ENCODE measurements at regions of chr7 and their contacts with region 1.

Region 1: DNA sequence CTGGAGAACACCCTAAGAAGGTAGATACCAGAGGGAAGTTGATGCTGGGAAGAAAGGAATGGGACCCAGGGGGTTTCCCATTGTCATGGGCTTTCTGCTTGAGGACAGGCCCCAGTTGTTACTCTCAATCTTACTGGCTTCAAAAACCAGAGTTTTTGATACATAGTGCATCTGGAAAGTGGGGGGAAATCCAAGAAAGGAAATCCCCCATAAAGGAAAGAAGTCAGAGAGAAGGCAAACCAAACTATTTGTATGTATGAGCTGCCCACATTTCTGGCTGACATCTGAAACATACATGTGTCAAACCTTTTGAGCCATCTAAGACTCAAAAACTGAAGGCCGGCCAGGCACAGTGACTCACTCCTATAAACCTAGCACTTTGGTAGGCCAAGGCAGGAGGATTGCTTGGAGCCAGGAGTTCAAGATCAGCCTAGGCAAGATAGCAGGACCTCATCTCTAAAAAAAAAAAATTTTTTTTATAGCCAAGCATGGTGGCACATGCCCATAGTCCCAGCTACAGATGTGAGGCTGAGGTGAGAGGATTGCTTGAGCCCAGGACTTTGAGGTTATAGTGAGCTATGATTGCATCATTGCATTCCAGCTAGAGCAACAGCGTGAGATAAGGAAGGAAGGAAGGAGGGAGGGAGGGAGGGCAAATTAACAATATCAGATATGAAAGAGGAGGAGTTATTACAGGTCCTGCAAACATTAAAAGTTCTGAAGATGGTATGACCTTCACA is 6.6 kb upstream of the COA1 start:
- DNase-seq: peak; percentile 74
- ATAC-seq: peak; percentile 95
- H3K4me3 Mint-ChIP-seq: no peak overlapping the region
- H3K27ac Mint-ChIP-seq: peak overlapping the region; percentile 73
- H3K4me1 Mint-ChIP-seq: peaks cover 22% of the 10 kb centered on the region
- H3K27me3 Mint-ChIP-seq: peaks cover 2% of the 10 kb centered on the region

Region 2: DNA sequence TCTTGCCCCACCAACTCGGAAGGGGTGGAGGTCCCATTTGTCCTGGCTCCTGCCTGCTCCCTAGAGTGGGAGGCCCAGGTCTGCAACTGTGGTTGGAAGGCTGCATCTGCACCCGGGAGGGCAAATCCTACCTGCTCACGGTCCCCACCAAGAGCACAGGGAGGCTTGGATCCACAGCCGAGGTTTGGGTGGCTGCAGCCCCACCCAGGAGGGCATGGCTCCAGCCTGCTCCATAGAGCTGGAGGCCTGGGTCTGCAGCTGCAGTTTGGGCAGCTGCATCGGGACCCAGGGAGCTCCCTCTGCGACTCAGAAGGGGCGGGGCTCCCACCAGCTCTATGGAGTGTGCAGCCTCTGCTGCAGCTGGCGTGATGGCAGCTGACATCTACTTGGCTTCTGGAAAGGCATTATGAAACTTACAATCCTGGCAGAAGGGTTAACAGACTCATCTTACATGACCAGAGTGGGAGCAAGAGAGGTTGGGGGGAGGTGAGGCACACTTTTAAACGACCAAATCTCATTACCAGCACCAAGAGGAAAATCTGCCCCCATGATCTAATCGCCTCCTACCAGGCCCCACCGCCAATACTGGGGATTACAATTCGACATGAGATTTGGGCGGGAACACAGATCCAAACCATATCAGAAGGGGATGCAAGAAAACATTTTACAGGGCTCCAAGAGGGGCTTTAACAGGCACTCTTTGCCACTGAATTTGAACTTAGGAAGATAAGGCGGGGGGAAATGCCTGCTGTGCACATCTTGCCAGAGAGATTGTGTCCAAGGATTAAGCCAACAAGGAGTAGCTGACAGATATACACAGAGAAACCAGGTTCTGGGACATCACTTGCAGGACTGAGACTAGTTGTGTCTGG is 14.3 kb after region 1 on chr7:
- CTCF ChIA-PET with region 1: interaction called, 5 read pairs
- POLR2A ChIA-PET with region 1: interaction called, 11 read pairs
- intact Hi-C with region 1: loop called in 1 of 2 experiments (anchors 2 kb)
- DNase-seq: no peak
- ATAC-seq: no peak
- H3K4me3 Mint-ChIP-seq: no peak overlapping the region
- H3K27ac Mint-ChIP-seq: no peak overlapping the region
- H3K4me1 Mint-ChIP-seq: peaks cover 14% of the 10 kb centered on the region
- H3K27me3 Mint-ChIP-seq: peaks cover 8% of the 10 kb centered on the region